CD4-positive, alpha-beta memory T cell (primary cell): ENCODE measurements at regions of chr9 and their contacts with region 1.

Region 1: GRCh38 chr9:124257844-124258606 is at the start of gene NEK6:
- DNase-seq: peak; percentile 41 to 55 (median 52)
- H3K4me3 ChIP-seq: peak within 1 kb of the TSS; percentile 65
- H3K4me3 Mint-ChIP-seq: peak within 1 kb of the TSS; percentile 94 to 97 (median 96)
- H3K27ac ChIP-seq: peak within 1 kb of the TSS; percentile 15
- H3K27ac Mint-ChIP-seq: peak within 1 kb of the TSS; percentile 83 to 96 (median 91)
- H3K4me1 ChIP-seq: peaks cover 32% of the 10 kb centered on the region
- H3K4me1 Mint-ChIP-seq: peaks cover 33 to 68% (median 51%) of the 10 kb centered on the region in 4 donors
- H3K27me3 ChIP-seq: no peaks in the 10 kb centered on the region
- H3K27me3 Mint-ChIP-seq: no peaks in the 10 kb centered on the region
- total RNA-seq, gene NEK6: 9.9 to 11.7 TPM

Region 2: DNA sequence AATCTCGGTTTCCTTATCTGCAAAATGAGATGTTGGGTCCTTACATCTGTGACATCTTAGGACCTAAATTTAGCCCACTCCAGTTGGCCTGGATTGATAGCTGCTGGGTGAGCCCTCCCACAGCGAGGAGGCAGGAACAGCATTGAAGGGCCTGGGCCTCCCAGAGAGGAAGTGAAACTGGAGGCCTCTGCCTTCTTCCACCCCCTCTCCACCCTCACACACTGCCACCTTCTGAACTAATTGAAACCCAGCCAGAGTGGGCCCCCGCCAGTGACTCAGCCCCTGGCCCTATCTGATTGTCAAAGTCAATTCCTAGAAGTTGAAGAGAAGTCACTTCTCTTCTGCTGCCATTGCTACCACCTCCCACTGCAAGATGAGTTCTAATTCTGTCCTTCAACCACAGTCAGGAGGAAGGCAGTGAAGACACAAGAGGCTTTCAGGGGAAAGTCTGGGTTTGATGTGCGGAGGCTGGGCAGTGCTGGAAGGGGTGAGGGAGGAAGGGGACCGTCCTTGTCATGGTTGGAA is 55.5 kb before region 1 on chr9:
- CTCF ChIA-PET with region 1: no interaction called
- POLR2A ChIA-PET with region 1: no interaction called
- intact Hi-C with region 1: loop called (anchors 10 kb)
- DNase-seq: peak; percentile 32 to 55 (median 45)
- H3K4me3 ChIP-seq: peak overlapping the region in 1 of 2 donors; percentile 19
- H3K4me3 Mint-ChIP-seq: peak overlapping the region; percentile 56 to 78 (median 74)
- H3K27ac ChIP-seq: no peak overlapping the region
- H3K27ac Mint-ChIP-seq: peak overlapping the region; percentile 83 to 96 (median 90)
- H3K4me1 ChIP-seq: peaks cover 39% of the 10 kb centered on the region
- H3K4me1 Mint-ChIP-seq: peaks cover 29 to 48% (median 38%) of the 10 kb centered on the region in 4 donors
- H3K27me3 ChIP-seq: no peaks in the 10 kb centered on the region
- H3K27me3 Mint-ChIP-seq: no peaks in the 10 kb centered on the region

Region 3: GRCh38 chr9:124415102-124415851 is 157.3 kb after region 1 on chr9 and contains the start of gene PSMB7:
- CTCF ChIA-PET with region 1: no interaction called
- POLR2A ChIA-PET with region 1: no interaction called
- intact Hi-C with region 1: loop called (anchors 10 kb)
- DNase-seq: peak; percentile 95 to 97 (median 96)
- H3K4me3 ChIP-seq: peak within 1 kb of the TSS; percentile 67 to 98
- H3K4me3 Mint-ChIP-seq: peak within 1 kb of the TSS; percentile 95 to 99 (median 98)
- H3K27ac ChIP-seq: peak within 1 kb of the TSS; percentile 72
- H3K27ac Mint-ChIP-seq: peak within 1 kb of the TSS; percentile 91 to 98 (median 98)
- H3K4me1 ChIP-seq: peaks cover 22% of the 10 kb centered on the region
- H3K4me1 Mint-ChIP-seq: peaks cover 17 to 41% (median 23%) of the 10 kb centered on the region in 4 donors
- H3K27me3 ChIP-seq: no peaks in the 10 kb centered on the region
- H3K27me3 Mint-ChIP-seq: peaks cover 0 to 3% of the 10 kb centered on the region in 2 donors
- total RNA-seq, gene PSMB7: 56.9 to 58.6 TPM

Region 4: DNA sequence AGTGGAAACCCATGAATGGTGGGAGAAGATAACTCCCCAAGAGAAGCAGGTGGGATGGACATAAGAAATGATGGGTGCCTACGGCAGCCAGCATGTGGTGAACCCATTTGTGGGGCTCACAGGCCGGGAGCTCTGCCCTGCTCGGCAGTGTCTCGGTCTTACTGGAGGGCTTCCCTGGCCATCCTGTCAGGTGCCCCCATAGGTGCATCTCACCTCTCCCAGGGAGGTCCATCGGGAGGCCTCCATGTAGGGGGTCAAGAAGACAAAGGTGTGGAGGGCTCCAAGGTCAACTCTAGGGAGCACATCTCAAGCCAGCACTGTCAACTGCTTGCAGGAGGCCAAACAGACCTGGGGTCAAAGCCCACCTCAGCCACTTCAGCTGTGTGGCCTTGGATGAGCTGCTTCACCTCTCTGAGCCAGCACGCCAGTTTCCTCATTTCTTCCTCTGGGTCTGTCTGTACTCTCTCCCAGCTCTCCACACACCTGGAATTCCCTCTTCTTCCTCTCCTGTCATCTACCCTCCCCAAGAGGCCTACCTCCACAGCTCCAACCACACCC is 181.7 kb after region 1 on chr9:
- CTCF ChIA-PET with region 1: no interaction called
- POLR2A ChIA-PET with region 1: no interaction called
- intact Hi-C with region 1: no loop called
- DNase-seq: no peak
- H3K4me3 ChIP-seq: no peak overlapping the region
- H3K4me3 Mint-ChIP-seq: no peak overlapping the region
- H3K27ac ChIP-seq: no peak overlapping the region
- H3K27ac Mint-ChIP-seq: no peak overlapping the region
- H3K4me1 ChIP-seq: no peaks in the 10 kb centered on the region
- H3K4me1 Mint-ChIP-seq: no peaks in the 10 kb centered on the region
- H3K27me3 ChIP-seq: no peaks in the 10 kb centered on the region
- H3K27me3 Mint-ChIP-seq: peaks cover 16 to 28% of the 10 kb centered on the region in 2 donors